ENCODE measurements at regions of chr2 and their contacts with region 1.

Region 1: DNA sequence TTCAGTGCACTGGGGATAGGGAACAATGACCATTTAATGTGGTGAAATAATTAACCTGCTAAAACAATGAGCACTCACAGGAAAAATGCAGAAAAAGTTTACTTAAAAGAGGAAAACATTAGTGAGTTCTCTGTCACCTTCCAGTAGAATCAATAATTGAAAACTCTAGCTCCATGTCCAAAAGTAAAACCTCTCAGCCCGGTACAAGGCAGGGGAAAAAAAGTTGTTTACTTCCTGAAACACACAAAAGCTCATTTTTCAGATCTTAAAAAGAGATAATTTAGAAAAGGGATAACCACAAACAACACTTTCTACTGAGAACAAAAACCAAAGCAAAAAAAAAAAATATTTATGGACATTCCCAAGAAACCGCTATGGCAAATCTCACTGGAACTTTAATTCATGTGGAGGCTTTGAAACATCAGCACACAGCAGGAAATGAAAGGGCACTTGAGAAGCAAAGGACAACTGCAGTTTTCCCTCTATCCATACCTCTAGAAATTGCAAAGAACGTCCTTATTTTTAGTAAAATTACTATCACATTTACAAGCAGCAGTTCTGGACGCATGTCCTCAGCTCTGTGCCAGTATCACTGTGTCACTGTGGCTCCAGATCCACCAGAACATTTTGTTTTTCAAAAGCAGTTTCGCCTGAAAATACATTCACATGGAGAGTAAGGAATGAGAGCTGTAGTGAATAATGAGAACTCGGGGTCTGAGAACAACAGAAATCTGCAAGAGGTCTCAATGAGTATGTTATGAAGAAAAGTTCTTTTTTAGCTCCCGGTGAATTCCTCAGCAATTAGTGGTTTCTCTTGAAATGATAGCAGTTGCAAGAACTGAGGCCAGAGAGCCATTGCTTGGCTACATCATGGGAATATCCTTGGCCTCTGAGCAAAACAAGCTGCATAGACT is 44.7 kb upstream of the DNAH7 start:
- DNase-seq: no peak
- ATAC-seq: no peak
- H3K4me3 ChIP-seq: no peak overlapping the region
- H3K4me3 Mint-ChIP-seq: peak overlapping the region in 6 of 10 donors; percentile 20 to 56 (median 34)
- H3K27ac ChIP-seq: no peak overlapping the region
- H3K27ac Mint-ChIP-seq: peak overlapping the region in 2 of 9 donors; percentile 51 to 77
- H3K4me1 ChIP-seq: no peaks in the 10 kb centered on the region
- H3K4me1 Mint-ChIP-seq: peaks cover 4 to 28% (median 20%) of the 10 kb centered on the region in 7 donors
- H3K27me3 ChIP-seq: no peaks in the 10 kb centered on the region
- H3K27me3 Mint-ChIP-seq: no peaks in the 10 kb centered on the region

Region 2: DNA sequence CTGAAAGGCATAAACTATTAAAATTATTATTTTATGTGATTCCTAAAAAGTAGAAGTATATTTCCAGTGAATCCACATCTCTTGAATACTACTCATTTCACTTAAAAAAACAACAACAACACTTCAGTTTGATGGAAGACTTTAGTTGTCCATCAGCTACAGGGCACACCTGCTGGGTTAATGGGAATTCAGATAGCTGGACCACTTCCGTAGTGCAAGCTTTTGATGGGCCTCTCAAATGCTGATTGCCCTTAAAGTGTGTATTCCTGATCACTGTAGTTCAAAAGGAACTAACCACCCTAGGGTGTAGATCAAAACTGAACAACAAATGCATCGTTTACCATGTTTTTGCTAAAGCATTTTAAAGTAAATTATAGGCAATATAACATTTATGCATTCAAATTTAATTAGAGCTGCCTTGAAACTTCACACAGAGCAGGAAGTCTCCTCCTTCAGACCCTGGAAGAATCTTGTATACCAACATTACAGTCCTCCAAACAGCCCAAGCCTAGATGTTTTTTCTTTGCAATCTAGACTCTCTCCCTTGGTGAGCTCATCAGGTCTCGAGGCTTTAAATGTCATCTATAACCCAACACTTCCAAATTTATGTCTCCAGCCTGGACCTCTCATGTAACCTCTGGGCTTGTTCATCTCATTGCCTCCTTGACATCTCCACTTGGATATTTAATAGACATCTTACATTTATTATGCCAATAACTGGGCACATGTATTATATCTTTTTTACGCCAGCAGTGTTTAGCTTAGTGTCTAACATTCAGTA is 966.4 kb before region 1 on chr2:
- CTCF ChIA-PET with region 1: no interaction called
- POLR2A ChIA-PET with region 1: no interaction called
- intact Hi-C with region 1: no loop called
- DNase-seq: no peak
- ATAC-seq: no peak
- H3K4me3 ChIP-seq: no peak overlapping the region
- H3K4me3 Mint-ChIP-seq: no peak overlapping the region
- H3K27ac ChIP-seq: no peak overlapping the region
- H3K27ac Mint-ChIP-seq: peak overlapping the region in 1 of 9 donors; percentile 24
- H3K4me1 ChIP-seq: no peaks in the 10 kb centered on the region
- H3K4me1 Mint-ChIP-seq: no peaks in the 10 kb centered on the region
- H3K27me3 ChIP-seq: no peaks in the 10 kb centered on the region
- H3K27me3 Mint-ChIP-seq: peaks cover 0 to 3% (median 0%) of the 10 kb centered on the region in 5 donors

Region 3: GRCh38 chr2:196703695-196704094 is 590.4 kb after region 1 on chr2:
- CTCF ChIA-PET with region 1: no interaction called
- POLR2A ChIA-PET with region 1: no interaction called
- intact Hi-C with region 1: loop called in 1 of 2 experiments (anchors 5 kb)
- DNase-seq: no peak
- ATAC-seq: no peak
- H3K4me3 ChIP-seq: no peak overlapping the region
- H3K4me3 Mint-ChIP-seq: no peak overlapping the region
- H3K27ac ChIP-seq: no peak overlapping the region
- H3K27ac Mint-ChIP-seq: no peak overlapping the region
- H3K4me1 ChIP-seq: no peaks in the 10 kb centered on the region
- H3K4me1 Mint-ChIP-seq: peaks cover 0 to 3% (median 0%) of the 10 kb centered on the region in 7 donors
- H3K27me3 ChIP-seq: no peaks in the 10 kb centered on the region
- H3K27me3 Mint-ChIP-seq: peaks cover 0 to 4% (median 0%) of the 10 kb centered on the region in 5 donors